ENCODE measurements at regions of chr6 and their contacts with region 1.

Region 1: GRCh38 chr6:57303931-57304681 is 13.3 kb upstream of the PRIM2 start:
- DNase-seq: no peak
- ATAC-seq: peak in 7 of 8 donors; percentile 67 to 88 (median 78)
- H3K4me3 ChIP-seq: no peak overlapping the region
- H3K27ac ChIP-seq: peak overlapping the region in 6 of 10 donors; percentile 18 to 66 (median 44)
- H3K4me1 ChIP-seq: peaks cover 0 to 26% (median 2%) of the 10 kb centered on the region in 9 donors
- H3K27me3 ChIP-seq: no peaks in the 10 kb centered on the region
- CTCF ChIP-seq: no peak

Region 2: GRCh38 chr6:57177545-57178265 is 126.4 kb before region 1 on chr6:
- intact Hi-C with region 1: loop called in 1 of 10 experiments (anchors 10 kb)
- DNase-seq: peak; percentile 24 to 58
- ATAC-seq: peak; percentile 68 to 88 (median 75)
- H3K4me3 ChIP-seq: peak overlapping the region in 7 of 10 donors; percentile 12 to 41 (median 32)
- H3K27ac ChIP-seq: peak overlapping the region; percentile 4 to 92 (median 72)
- H3K4me1 ChIP-seq: peaks cover 3 to 63% (median 31%) of the 10 kb centered on the region in 9 donors
- H3K27me3 ChIP-seq: no peaks in the 10 kb centered on the region
- CTCF ChIP-seq: no peak